ENCODE measurements at regions of chr4 and their contacts with region 1.

Region 1: DNA sequence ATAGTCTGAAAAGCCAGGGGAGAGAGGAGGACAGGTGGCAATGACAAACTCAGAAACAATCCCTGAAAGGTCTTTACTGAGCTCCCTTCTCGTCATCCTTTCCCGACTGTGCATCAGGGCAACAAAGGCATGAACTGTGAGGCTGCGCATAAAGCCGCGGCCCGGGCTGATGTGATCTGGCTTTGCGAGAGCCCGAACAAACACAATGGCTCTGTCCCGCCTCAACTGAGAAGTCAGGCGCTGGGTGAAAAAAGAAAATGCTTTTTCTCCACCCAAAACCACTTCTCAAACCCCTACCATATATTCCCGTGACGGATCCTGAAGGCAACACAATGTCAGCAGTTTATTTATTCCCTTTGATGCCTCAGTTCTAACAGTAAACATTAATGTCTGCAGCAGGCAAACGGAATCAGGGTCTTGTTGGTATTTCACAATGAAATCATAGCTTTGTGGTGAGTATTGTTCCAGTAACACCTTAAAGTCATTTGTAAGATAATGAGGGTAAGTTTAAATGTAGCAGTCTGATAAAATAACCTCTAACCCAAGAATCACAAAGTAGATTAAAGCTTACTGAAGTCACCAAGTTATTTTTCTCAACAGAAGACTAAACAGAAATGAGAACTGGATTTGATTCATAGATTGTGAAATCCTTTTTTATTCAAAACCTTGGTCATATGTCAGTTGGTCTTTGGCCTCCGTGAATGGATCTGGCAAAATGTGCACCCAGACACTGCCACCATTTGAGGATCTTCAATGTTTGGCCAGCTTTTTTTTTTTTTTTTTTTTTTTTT is 67.4 kb downstream of the APBB2 start:
- DNase-seq: no peak
- ATAC-seq: no peak
- H3K4me3 ChIP-seq: no peak overlapping the region
- H3K27ac ChIP-seq: peak overlapping the region; percentile 38
- H3K4me1 ChIP-seq: peaks cover 22% of the 10 kb centered on the region
- H3K27me3 ChIP-seq: no peaks in the 10 kb centered on the region
- CTCF ChIP-seq: no peak
- EP300 ChIP-seq: no peak
- POLR2A ChIP-seq: no peak
- RAD21 ChIP-seq: no peak

Region 2: DNA sequence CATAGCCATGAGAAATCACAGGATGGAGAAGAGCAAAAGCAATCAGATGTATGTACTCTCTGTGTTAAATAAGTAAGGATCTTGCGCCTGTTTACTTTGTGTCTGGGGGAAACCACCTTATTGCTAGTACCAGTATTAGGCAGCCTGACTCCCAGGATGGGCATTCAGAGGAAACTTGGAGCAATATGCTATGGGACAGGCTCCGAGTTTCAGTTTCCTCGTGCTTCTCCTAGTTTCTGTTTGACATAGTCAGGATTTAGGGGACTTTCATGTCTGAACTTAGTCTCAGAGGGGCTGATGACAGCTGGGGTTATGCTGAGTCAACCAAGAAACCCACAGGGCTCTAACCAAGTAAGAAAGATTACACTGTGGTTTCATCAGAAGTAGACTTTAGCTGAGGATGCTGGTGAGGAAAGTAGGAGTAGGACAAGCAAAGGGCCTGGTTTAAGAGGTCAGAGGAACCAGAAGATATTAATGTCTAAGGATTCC is 383.6 kb before region 1 on chr4:
- CTCF ChIA-PET with region 1: no interaction called
- POLR2A ChIA-PET with region 1: interaction called, 10 read pairs
- RAD21 ChIA-PET with region 1: no interaction called
- SMC1A ChIA-PET with region 1: no interaction called
- in situ Hi-C with region 1: no loop called
- intact Hi-C with region 1: no loop called
- DNase-seq: peak; percentile 88
- ATAC-seq: peak; percentile 100
- H3K4me3 ChIP-seq: no peak overlapping the region
- H3K27ac ChIP-seq: 0 out of 2 replicates have a peak overlapping the region, but pooled peaks have one; percentile 20
- H3K4me1 ChIP-seq: peaks cover 14% of the 10 kb centered on the region
- H3K27me3 ChIP-seq: no peaks in the 10 kb centered on the region
- CTCF ChIP-seq: no peak
- EP300 ChIP-seq: peak in 1 of 2 experiments; percentile 82; a peak in 3 of 4 replicates
- POLR2A ChIP-seq: no peak
- RAD21 ChIP-seq: no peak

Measured in GM12878 (cell line).